ENCODE measurements at regions of chr1 and their contacts with region 1.

Region 1: DNA sequence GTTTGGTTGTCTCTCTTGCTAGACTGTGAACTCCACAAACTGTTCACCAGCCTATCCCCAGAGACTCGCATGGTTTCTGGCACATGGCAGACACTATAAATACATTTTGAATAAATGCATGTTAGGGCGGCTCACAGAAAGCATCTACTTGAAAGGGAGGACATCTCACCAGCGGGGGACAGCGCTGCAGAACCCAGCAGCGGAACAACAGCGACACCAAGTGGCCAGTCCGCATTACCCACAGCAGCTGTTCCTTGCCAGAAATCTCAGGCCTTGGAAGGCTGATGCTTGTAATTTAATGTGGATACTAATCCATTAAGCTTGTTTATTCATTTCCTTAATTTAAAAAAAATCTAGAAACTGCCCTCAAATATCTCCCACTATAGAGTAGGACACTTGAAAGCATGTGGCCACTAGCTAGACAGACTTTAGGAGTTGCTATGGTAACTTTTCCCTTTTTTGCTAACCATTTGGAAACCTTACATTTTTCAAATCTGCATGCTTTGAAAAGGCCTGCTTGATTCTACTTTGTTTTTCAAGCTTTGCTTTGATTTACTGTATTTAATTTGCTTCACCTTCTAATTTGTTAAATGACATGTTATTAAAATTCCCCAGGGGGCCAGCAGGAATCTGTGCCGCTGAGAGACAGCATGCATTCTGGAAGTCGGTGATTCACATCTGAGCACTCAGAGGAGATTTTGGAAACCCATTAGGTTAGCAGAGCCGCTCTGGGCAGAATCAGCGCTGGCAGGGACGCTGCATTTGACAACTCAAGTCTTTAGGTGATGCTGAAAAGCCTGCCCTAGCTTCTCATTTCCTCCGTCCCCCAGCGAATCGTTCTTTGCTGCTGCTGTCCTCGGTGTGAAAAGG is 63.5 kb upstream of the SSX2IP start:
- DNase-seq: peak; percentile 48 to 85 (median 72)
- H3K4me3 ChIP-seq: no peak overlapping the region
- H3K27ac ChIP-seq: no peak overlapping the region
- H3K4me1 ChIP-seq: peaks cover 0 to under 1% of the 10 kb centered on the region in 2 donors
- H3K27me3 ChIP-seq: peaks cover 9% of the 10 kb centered on the region
- CTCF ChIP-seq: peak; percentile 85 to 98 (median 90)
- POLR2A ChIP-seq: no peak

Region 2: GRCh38 chr1:84156210-84156621 is 597.5 kb before region 1 on chr1:
- intact Hi-C with region 1: loop called in 1 of 2 experiments (anchors 10 kb)
- DNase-seq: peak in 1 of 7 donors; percentile 16
- H3K4me3 ChIP-seq: no peak overlapping the region
- H3K27ac ChIP-seq: no peak overlapping the region
- H3K4me1 ChIP-seq: peaks cover 0 to 11% of the 10 kb centered on the region in 2 donors
- H3K27me3 ChIP-seq: no peaks in the 10 kb centered on the region
- CTCF ChIP-seq: no peak
- POLR2A ChIP-seq: no peak

Region 3: GRCh38 chr1:84433258-84434080 is 320.3 kb before region 1 on chr1:
- intact Hi-C with region 1: loop called in 1 of 2 experiments (anchors 5 kb)
- DNase-seq: peak; percentile 61 to 92 (median 72)
- H3K4me3 ChIP-seq: peak overlapping the region in 1 of 4 donors; percentile 20
- H3K27ac ChIP-seq: peak overlapping the region in 3 of 5 donors; percentile 1 to 69 (median 49)
- H3K4me1 ChIP-seq: peaks cover 0 to 15% of the 10 kb centered on the region in 2 donors
- H3K27me3 ChIP-seq: no peaks in the 10 kb centered on the region
- CTCF ChIP-seq: peak; percentile 66 to 89 (median 82)
- POLR2A ChIP-seq: no peak

Region 4: DNA sequence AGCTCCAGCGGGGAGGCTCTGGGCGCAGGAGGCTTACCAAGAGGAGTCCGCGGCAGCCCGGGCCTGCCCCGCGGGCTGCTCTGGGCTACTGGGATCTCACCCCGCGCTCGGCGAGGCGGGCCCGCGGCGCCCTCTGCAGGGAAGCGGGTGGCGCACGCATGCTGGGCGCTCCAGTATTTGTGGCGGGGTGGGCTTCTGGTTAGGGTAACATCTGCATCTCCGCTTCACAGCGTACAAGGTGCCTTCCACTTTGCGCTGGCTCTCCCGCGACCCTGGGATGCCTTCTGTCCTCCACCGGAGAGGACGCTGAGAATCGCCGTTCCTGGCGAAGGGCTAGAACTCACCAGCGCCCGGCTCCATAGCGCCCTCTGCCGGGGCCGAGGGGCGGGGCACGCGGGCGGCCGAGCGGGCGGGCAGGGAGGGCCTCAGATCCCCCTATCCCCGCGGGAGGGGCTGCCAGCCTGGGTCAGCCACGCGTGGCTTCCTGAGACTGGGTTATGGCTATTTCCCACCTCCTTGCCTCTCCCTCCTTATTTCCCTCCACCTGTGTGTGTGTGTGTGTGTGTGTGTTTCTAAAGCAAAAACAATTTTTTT is 132.9 kb before region 1 on chr1:
- intact Hi-C with region 1: loop called in 1 of 2 experiments (anchors 10 kb)
- DNase-seq: peak; percentile 68 to 85 (median 77)
- H3K4me3 ChIP-seq: peak overlapping the region; percentile 7 to 55 (median 32)
- H3K27ac ChIP-seq: peak overlapping the region in 3 of 5 donors; percentile 52 to 74 (median 69)
- H3K4me1 ChIP-seq: peaks cover 8 to 17% of the 10 kb centered on the region in 2 donors
- H3K27me3 ChIP-seq: no peaks in the 10 kb centered on the region
- CTCF ChIP-seq: peak; percentile 75 to 98 (median 90)
- POLR2A ChIP-seq: no peak

Region 5: DNA sequence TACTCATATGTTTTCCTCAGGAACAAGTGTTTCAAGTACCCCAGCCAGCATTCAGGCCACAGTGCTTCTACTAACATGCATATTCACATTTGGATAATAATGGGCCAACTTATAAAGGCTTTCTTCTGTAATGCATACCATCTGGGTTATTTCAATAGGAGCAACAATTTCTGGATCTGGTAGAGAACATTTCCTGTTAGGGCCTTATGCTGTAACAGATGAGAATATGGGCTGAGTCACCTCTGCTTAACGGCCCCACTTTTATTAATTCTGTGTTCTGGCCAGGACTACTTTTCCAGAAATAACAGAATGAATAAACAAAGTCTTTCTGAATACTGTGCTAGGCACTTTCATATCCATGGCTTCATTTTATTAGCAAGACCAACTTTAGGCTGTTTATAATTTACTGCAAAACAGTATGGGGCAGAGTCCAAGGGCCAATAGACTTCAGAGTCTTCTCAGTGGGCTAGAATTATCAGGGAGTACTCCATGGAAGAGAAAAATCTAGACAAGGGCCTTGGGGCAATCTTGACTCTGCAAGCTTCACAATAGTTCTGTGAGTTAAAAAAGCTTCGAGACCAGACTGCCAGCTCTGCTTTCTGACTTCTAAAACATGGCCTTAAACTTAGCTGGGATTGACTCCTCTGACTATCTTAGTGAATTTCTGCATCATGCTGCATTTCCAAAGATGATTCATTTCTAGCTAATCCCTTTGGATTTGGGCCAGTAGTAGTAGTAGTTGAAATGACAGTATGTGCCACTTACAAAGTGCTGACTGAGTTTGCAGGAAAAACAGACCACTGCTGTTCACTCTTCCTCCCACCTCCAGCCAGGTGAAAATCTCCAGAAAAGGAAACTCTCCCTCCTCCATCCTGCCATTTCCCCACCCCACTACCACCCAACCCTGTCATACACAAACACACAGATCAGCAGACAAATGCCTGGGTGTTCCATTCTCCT is 55.3 kb before region 1 on chr1:
- intact Hi-C with region 1: no loop called
- DNase-seq: peak in 1 of 7 donors; percentile 18
- H3K4me3 ChIP-seq: no peak overlapping the region
- H3K27ac ChIP-seq: peak overlapping the region in 3 of 5 donors; percentile 54 to 65 (median 56)
- H3K4me1 ChIP-seq: peaks cover 0 to 5% of the 10 kb centered on the region in 2 donors
- H3K27me3 ChIP-seq: no peaks in the 10 kb centered on the region
- CTCF ChIP-seq: no peak
- POLR2A ChIP-seq: no peak

Region 6: DNA sequence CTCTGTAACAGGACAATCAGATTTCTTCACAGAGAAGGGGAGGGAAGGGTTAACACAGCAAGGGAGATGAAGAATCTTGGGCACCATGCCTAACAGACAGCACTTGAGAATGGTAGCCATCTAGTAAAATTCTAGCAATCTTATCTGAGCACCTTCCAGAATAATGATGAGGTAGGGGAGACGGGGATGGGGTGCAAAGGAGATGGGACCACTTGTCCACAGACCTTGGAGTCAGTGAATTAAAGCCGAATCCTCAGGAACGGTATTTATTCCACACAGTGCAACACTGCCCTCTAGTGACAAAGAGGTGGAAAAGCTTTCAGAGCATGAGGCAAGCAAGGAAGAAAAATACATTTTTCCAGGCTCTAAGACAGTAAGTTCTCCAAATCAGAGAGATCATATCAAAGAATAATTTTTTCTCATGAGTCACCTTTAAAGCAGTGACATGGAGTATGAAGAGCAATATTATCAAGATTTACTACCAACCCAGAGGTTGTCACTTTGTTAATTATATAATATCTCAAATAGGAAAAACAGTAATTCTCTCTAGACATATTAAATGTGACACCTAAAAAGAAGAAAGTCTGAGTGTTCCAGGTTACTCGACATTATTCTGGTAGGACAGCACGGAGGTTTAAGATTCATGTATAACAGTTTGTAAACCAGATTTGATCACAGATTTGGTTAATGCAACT is 182.5 kb after region 1 on chr1:
- intact Hi-C with region 1: loop called in 1 of 2 experiments (anchors 10 kb)
- DNase-seq: peak; percentile 21 to 68 (median 39)
- H3K4me3 ChIP-seq: no peak overlapping the region
- H3K27ac ChIP-seq: no peak overlapping the region
- H3K4me1 ChIP-seq: peaks cover 6 to 7% of the 10 kb centered on the region in 2 donors
- H3K27me3 ChIP-seq: no peaks in the 10 kb centered on the region
- CTCF ChIP-seq: peak; percentile 88 to 96 (median 92)
- POLR2A ChIP-seq: no peak

Measured in adrenal gland (tissue), 19 donors.